ENCODE measurements at regions of chr14 and their contacts with region 1.

Region 1: DNA sequence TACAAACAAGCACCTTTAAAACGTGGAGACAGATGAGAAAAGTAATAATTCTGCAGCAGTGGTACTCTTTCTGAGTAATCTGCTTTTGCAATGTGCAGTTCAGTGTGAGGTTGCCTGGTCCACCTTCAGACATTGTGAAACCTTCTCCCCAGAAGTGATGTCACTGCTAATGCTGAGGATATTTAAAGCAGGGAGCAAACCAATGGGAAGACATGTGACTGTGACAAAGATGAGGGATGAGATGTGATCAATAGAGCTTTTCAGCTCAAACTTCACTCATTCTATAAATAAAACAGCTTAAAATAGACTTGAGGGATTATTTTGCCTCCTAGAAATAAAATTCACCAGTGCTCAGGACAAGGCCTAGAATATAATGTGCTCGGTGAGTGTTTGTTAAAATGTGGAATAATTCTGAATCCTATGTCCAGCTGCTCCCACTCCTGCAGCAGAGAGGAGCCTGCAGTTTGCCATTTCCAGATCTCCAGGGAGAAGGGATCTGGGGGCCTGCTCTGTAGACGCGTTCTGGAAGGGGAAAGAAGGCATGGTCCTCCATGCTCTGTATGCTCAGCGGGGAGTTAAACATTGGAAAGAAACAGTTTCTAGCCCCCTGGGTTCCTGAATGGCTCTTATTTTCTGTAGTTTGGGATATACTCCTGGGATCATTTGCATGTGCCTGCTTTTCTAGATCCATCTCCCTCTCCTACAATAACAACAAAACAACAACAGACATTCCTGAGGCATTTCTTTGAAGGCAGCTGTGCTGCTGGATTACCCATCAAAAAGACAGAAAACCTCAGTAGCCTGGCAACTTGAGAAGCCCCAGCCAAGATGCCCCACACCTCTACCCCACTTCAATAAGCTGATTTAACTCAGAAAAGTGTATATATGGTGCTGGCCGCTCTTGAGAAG is 8.9 kb downstream of the SLC7A8 start:
- DNase-seq: no peak
- H3K4me3 ChIP-seq: no peak overlapping the region
- H3K27ac ChIP-seq: no peak overlapping the region
- H3K4me1 ChIP-seq: peaks cover 37% of the 10 kb centered on the region
- H3K27me3 ChIP-seq: no peaks in the 10 kb centered on the region
- CTCF ChIP-seq: no peak

Region 2: DNA sequence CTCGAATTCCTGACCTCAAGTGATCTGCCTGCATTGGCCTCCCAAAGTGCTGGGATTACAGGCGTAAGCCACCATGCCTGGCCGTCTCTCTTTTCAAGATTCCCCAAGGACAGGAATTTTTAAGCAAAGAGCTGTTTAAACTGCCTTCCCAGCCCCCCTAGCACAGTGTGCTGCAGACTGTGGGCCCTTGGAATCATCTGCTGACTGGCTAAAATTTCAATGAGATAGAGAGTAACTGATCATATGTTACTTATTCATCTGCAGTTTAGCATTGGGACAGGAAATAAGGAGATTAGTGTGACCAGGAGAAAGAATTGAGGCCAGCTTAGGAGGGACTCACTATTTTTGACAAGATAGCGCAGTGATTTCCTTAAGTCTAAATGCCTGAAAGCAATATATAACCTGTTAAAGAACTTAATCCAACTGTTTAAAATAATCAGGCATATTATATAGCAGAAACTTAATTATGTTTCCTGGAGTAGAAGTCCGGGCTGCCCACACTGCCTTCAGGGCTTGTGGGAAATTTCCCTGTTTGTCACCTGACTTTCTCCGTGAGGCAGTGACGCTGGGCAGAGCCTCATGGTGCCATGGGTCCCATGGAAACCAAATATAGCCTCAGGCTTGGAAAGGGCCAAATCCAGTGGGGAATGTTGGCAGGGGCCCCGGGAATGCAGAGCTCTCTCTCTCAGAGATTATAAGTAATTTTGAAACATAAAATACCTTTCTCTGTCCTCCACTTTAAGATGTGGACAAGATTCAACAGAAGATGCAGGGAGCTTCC is 32.7 kb before region 1 on chr14:
- CTCF ChIA-PET with region 1: no interaction called
- POLR2A ChIA-PET with region 1: no interaction called
- intact Hi-C with region 1: no loop called
- DNase-seq: peak; percentile 87
- H3K4me3 ChIP-seq: no peak overlapping the region
- H3K27ac ChIP-seq: peak overlapping the region; percentile 79
- H3K4me1 ChIP-seq: peaks cover 40% of the 10 kb centered on the region
- H3K27me3 ChIP-seq: no peaks in the 10 kb centered on the region
- CTCF ChIP-seq: no peak

Region 3: GRCh38 chr14:23186913-23187654 is 12.6 kb after region 1 on chr14:
- CTCF ChIA-PET with region 1: no interaction called
- POLR2A ChIA-PET with region 1: interaction called, 29 read pairs
- intact Hi-C with region 1: no loop called
- DNase-seq: peak; percentile 76
- H3K4me3 ChIP-seq: no peak overlapping the region
- H3K27ac ChIP-seq: no peak overlapping the region
- H3K4me1 ChIP-seq: peaks cover 3% of the 10 kb centered on the region
- H3K27me3 ChIP-seq: no peaks in the 10 kb centered on the region
- CTCF ChIP-seq: peak; percentile 79